Sigmoid colon (tissue), 7 donors: ENCODE measurements at regions of chr11 and their contacts with region 1.

Region 1: GRCh38 chr11:236774-237767 is at the start of gene PSMD13:
- DNase-seq: peak; percentile 90
- H3K4me3 ChIP-seq: peak within 1 kb of the TSS; percentile 83 to 96 (median 87)
- H3K27ac ChIP-seq: peak within 1 kb of the TSS; percentile 94 to 99 (median 95)
- H3K4me1 ChIP-seq: peaks cover 0 to 30% (median 25%) of the 10 kb centered on the region in 4 donors
- H3K27me3 ChIP-seq: no peaks in the 10 kb centered on the region
- CTCF ChIP-seq: peak in 1 of 4 experiments; percentile 8
- EP300 ChIP-seq: no peak
- POLR2A ChIP-seq: peak; percentile 6 to 32
- total RNA-seq, gene PSMD13: 86.2 to 118 (median 99.3) TPM

Region 2: DNA sequence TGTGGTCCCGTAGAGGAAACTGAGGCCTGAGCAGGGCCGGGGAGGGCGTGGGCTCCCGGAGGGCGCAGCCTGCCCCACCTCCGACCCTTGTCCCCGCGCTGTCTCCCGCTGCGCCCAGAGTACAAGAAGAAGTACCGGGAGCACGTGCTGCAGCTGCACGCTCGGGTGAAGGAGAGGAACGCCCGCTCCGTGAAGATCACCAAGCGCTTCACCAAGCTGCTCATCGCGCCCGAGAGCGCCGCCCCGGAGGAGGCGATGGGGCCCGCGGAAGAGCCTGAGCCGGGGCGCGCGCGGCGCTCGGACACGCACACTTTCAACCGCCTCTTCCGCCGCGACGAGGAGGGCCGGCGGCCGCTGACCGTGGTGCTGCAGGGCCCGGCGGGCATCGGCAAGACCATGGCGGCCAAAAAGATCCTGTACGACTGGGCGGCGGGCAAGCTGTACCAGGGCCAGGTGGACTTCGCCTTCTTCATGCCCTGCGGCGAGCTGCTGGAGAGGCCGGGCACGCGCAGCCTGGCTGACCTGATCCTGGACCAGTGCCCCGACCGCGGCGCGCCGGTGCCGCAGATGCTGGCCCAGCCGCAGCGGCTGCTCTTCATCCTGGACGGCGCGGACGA is 43.0 kb after region 1 on chr11:
- intact Hi-C with region 1: no loop called
- DNase-seq: peak; percentile 63
- H3K4me3 ChIP-seq: peak overlapping the region in 3 of 4 donors; percentile 7 to 32 (median 22)
- H3K27ac ChIP-seq: no peak overlapping the region
- H3K4me1 ChIP-seq: peaks cover 0 to 31% (median 26%) of the 10 kb centered on the region in 4 donors
- H3K27me3 ChIP-seq: peaks cover 46 to 76% (median 62%) of the 10 kb centered on the region in 3 donors
- CTCF ChIP-seq: no peak
- EP300 ChIP-seq: no peak
- POLR2A ChIP-seq: no peak

Region 3: GRCh38 chr11:335779-336658 is 98.9 kb after region 1 on chr11:
- intact Hi-C with region 1: no loop called
- DNase-seq: peak; percentile 64
- H3K4me3 ChIP-seq: no peak overlapping the region
- H3K27ac ChIP-seq: peak overlapping the region; percentile 59 to 74 (median 61)
- H3K4me1 ChIP-seq: peaks cover 0 to 15% (median 7%) of the 10 kb centered on the region in 4 donors
- H3K27me3 ChIP-seq: no peaks in the 10 kb centered on the region
- CTCF ChIP-seq: no peak
- EP300 ChIP-seq: no peak
- POLR2A ChIP-seq: no peak

Region 4: GRCh38 chr11:535519-536454 is 298.7 kb after region 1 on chr11 and contains the start of gene HRAS:
- intact Hi-C with region 1: loop called (anchors 10 kb)
- DNase-seq: peak; percentile 97
- H3K4me3 ChIP-seq: peak within 1 kb of the TSS; percentile 57 to 94 (median 80)
- H3K27ac ChIP-seq: peak within 1 kb of the TSS; percentile 82 to 88 (median 84)
- H3K4me1 ChIP-seq: peaks cover 0 to 37% (median 33%) of the 10 kb centered on the region in 4 donors
- H3K27me3 ChIP-seq: peaks cover 18 to 39% (median 21%) of the 10 kb centered on the region in 3 donors
- CTCF ChIP-seq: no peak
- EP300 ChIP-seq: no peak
- POLR2A ChIP-seq: peak in 1 of 2 donors; percentile 50
- total RNA-seq, gene HRAS: 27.8 to 59.3 (median 32.8) TPM